SK-N-SH (cell line): ENCODE measurements at regions of chr1 and their contacts with region 1.

Region 1: DNA sequence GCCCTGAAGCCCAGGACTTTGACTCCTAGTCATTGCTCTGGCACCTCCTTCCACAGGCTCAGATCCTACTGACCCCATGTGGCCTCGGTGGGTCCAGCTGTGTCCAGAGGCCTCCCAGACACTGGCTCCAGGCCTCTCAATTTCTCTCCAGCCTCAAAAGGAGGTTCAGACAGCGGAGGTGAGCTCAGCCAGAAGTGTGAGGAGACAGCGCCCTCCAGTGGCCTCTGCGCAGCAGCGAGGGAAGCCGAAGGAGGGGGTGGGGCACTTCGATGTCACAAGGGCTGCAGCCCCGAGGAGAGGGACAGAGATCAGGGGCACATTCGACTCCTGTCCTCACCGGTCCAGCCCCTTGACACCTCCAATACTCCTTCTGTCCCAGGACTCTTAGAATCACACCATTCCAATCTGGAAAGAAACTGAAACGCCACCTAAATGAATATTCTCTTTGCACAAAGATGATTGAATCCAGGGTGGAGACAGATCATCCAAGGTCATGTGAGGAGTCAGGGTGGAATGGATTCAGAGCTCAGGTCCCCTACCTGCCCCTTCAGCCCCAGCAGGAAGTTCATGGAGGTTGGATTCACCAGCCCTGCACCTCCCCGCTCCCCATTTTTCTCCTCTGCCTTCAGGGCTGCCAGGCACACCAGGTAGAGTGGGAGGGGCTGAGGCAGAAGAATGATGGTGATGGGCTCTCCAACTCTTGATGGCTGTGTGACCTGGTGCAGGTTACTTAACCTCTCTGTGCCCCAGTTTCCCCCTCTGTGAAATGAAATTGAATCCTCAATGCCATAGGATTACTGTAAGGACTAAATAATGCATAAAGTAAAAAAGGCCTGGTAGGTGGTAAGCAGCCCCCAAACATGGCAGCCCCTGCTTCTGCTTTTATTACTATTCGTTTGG is 34.8 kb upstream of the ZBTB40 start:
- DNase-seq: peak; percentile 84
- H3K4me3 ChIP-seq: 0 out of 4 replicates have a peak overlapping the region, but pooled peaks have one; percentile 9 to 45
- H3K27ac ChIP-seq: no peak overlapping the region; a peak in 1 of 4 replicates
- H3K4me1 ChIP-seq: peaks cover 7 to 26% of the 10 kb centered on the region in 2 experiments; a peak in 2 of 4 replicates
- H3K27me3 ChIP-seq: no peaks in the 10 kb centered on the region
- CTCF ChIP-seq: peak; percentile 97
- EP300 ChIP-seq: no peak
- RAD21 ChIP-seq: peak; percentile 98

Region 2: DNA sequence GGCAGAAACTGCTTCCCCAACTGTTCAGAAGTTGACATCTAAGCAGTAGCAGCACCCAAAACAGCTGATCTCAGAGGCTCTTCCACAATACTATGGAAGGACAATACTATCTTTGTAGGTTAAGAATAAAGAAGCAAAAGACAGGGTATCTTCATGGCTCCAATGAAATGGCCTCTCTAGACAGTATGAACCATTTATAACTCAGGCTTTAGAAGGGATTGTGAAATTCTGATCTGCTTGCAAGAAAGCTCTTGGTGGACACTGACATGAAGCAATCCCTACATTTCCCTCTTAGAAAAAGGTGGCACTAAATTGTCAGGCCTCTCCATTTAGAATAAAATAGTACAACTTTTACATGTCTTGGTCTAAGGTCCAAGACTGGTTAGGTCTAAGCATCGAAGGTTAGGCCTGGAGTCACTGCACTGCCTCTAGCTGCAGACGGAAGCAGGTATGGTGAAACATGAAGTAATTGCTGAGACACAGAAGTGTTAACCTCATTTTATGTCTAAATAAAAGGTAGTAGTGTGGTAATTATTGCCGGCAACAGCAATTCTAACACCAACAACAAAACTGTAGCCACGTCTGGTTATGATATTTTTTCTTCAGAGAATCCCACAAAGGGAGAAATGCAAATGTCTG is 1579.1 kb before region 1 on chr1:
- CTCF ChIA-PET with region 1: no interaction called
- POLR2A ChIA-PET with region 1: no interaction called
- DNase-seq: no peak
- H3K4me3 ChIP-seq: no peak overlapping the region
- H3K27ac ChIP-seq: no peak overlapping the region
- H3K4me1 ChIP-seq: no peaks in the 10 kb centered on the region
- H3K27me3 ChIP-seq: no peaks in the 10 kb centered on the region
- CTCF ChIP-seq: no peak
- EP300 ChIP-seq: no peak
- RAD21 ChIP-seq: no peak

Region 3: DNA sequence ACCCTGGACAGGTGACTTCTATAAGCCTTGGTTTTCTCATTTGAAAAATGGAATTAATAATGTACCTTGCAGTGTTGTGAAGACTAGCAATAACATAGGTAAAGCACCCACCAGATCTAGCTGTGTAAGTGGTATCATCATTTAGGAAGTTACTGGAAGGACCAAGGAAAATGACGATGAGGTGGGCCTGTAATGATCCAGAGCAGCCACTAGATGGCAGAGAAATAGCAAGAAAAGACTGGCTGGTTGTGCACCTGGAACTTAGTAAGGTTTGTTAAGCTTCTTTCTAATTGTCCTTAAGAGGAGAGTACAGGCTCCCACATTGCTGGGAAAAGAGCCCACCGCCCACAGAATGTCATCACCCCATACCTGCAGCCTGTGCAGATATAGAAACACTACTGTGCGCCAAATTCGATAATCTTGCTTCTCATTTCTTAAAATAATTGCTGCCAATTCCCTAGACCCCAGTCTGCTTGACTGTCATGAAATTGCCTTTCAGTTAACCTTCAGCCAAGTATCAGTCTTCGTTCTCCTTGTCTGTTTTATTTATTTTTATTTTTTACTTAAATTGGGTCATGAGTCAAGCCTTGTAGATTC is 311.1 kb before region 1 on chr1:
- CTCF ChIA-PET with region 1: interaction called, 72 read pairs
- POLR2A ChIA-PET with region 1: interaction called, 3 read pairs
- DNase-seq: peak; percentile 64
- H3K4me3 ChIP-seq: no peak overlapping the region; a peak in 1 of 4 replicates
- H3K27ac ChIP-seq: no peak overlapping the region; a peak in 2 of 4 replicates
- H3K4me1 ChIP-seq: peaks cover 4 to 22% of the 10 kb centered on the region in 2 experiments; a peak in 1 of 4 replicates
- H3K27me3 ChIP-seq: no peaks in the 10 kb centered on the region
- CTCF ChIP-seq: peak; percentile 86
- EP300 ChIP-seq: no peak
- RAD21 ChIP-seq: peak; percentile 87

Region 4: DNA sequence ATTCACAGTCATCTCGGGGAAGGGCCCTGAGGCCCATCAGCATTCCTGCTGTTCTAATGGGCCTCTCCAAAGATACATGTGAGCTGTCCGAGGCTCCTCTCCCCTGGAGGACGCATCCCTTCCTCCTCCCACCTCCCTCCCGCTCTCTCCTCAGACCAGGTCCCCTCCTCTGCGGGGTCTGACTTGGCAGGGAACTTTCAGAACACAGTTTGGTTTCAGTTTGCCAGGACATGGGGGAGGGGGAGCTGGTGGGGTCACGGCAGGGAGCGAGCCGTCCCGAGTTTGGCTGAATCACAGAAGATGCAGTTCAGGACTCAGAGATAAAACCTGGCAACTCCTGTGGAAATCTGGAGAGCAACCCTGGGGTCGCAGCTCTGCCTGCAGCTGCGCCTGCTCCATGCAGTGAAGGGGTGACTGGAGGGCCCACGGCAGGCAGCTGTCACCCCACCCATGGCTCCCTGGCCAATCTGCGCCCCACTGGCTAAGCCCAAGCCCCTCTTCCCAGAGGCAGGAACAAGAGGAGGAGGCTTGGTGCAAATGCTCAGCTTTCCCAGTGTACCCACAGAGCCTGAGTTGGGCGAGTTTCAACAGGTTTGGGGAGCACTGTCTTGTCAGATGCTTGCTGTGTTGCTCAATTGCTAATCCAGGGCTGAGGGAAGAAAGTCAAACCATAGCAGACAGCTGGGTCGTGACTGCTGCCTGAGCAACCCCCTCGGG is 279.6 kb before region 1 on chr1:
- CTCF ChIA-PET with region 1: interaction called, 173 read pairs
- POLR2A ChIA-PET with region 1: no interaction called
- DNase-seq: no peak
- H3K4me3 ChIP-seq: no peak overlapping the region
- H3K27ac ChIP-seq: no peak overlapping the region
- H3K4me1 ChIP-seq: peaks cover 3 to 31% of the 10 kb centered on the region in 2 experiments; a peak in 3 of 4 replicates
- H3K27me3 ChIP-seq: no peaks in the 10 kb centered on the region; the same call in 1 of the 2 replicates
- CTCF ChIP-seq: no peak
- EP300 ChIP-seq: no peak
- RAD21 ChIP-seq: no peak

Region 5: GRCh38 chr1:22350171-22350909 is 66.5 kb before region 1 on chr1:
- CTCF ChIA-PET with region 1: interaction called, 16 read pairs
- POLR2A ChIA-PET with region 1: interaction called, 6 read pairs
- DNase-seq: peak; percentile 81
- H3K4me3 ChIP-seq: no peak overlapping the region
- H3K27ac ChIP-seq: peak overlapping the region in 1 of 2 experiments; percentile 82; a peak in 2 of 4 replicates
- H3K4me1 ChIP-seq: peaks cover 0 to 27% of the 10 kb centered on the region in 2 experiments; a peak in 1 of 4 replicates
- H3K27me3 ChIP-seq: peaks cover 21% of the 10 kb centered on the region; the same call in 1 of the 2 replicates
- CTCF ChIP-seq: no peak
- EP300 ChIP-seq: peak in 1 of 2 experiments; percentile 21; a peak in 1 of 4 replicates
- RAD21 ChIP-seq: no peak

Region 6: GRCh38 chr1:22582661-22583635 is 166.1 kb after region 1 on chr1:
- CTCF ChIA-PET with region 1: interaction called, 14 read pairs
- POLR2A ChIA-PET with region 1: no interaction called
- DNase-seq: peak; percentile 93
- H3K4me3 ChIP-seq: no peak overlapping the region
- H3K27ac ChIP-seq: peak overlapping the region in 1 of 2 experiments; percentile 91; a peak in 2 of 4 replicates
- H3K4me1 ChIP-seq: peaks cover 0 to 44% of the 10 kb centered on the region in 2 experiments; a peak in 2 of 4 replicates
- H3K27me3 ChIP-seq: no peaks in the 10 kb centered on the region; the same call in 1 of the 2 replicates
- CTCF ChIP-seq: no peak
- EP300 ChIP-seq: peak in 1 of 2 experiments; percentile 77; a peak in 2 of 4 replicates
- RAD21 ChIP-seq: peak; percentile 14; the same call in 1 of the 2 replicates

Region 7: GRCh38 chr1:22930235-22930912 is 513.6 kb after region 1 on chr1:
- CTCF ChIA-PET with region 1: interaction called, 14 read pairs
- POLR2A ChIA-PET with region 1: no interaction called
- DNase-seq: peak; percentile 89
- H3K4me3 ChIP-seq: no peak overlapping the region
- H3K27ac ChIP-seq: no peak overlapping the region
- H3K4me1 ChIP-seq: no peaks in the 10 kb centered on the region
- H3K27me3 ChIP-seq: no peaks in the 10 kb centered on the region; the same call in 1 of the 2 replicates
- CTCF ChIP-seq: peak; percentile 80
- EP300 ChIP-seq: no peak
- RAD21 ChIP-seq: peak; percentile 88